OCI-LY7 (cell line): ENCODE measurements at regions of chr11 and their contacts with region 1.

Region 1: DNA sequence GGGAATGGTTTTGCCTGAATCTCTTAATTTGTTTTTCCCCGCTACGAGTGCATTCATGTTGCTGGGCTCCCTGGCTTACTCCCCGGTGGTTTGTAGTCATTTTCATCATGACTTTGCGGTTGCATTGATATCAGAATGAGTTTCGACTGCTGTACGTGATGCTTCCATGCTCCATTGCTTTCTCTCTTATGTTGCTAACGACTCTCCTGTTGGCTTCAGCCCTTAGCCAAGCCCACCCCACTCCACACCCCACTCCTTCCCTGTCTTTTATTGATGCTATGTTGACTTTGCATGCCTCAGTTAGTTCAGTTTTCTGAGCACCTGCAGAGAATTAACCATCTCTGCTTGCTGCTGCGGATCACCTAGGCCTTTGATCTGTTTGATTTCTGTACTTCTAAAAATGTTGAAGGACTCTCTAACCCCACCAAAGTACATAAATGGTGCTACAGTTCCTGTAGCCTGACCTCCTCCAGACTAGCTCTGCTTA is 65.3 kb downstream of the ARFGAP2 start:
- DNase-seq: peak; percentile 98
- H3K4me3 ChIP-seq: peak overlapping the region; percentile 62
- H3K27ac ChIP-seq: peak overlapping the region; percentile 99
- H3K4me1 ChIP-seq: peaks cover 71% of the 10 kb centered on the region
- CTCF ChIP-seq: peak; percentile 38; the same call in 1 of the 2 replicates

Region 2: DNA sequence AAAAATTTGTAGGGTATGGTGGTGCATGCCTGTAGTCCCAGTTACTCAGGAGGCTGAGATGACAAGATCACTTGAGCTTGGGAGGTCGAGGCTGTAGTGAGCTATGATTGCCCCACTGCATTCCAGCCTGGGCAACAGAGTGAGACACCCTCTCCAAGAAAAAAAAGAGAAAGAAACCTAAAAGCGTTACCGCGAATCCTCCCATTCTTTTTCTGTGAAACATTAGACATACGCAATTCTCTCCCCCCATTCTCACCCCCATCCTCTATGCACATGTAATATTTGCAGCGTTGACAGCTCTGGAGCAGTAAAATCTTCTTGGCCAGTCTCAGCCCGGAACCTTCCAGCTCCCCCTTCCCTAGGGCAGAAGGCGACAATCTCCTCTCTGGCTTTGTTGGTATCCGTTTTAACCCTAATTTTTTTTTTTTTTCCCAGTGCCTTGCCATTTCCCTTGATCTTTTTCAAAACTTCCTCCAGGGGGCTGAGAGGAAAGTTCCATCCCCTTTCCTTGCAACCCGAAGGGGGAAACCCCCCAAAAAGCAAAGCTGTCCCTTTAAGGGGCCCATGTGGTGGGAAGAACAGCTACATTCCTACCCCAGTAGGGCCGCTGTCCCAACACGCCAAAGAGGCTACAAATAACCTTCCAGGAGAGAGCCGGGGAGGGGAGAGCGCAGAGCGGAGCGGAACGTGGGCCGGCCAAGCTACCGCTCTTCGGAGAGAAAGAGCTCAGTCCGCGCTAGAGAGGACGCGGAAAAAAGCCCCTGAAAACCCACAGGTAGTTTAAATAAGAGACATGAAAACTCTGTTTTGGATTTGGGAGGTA is 194.9 kb before region 1 on chr11:
- CTCF ChIA-PET with region 1: no interaction called
- POLR2A ChIA-PET with region 1: interaction called, 4 read pairs
- intact Hi-C with region 1: loop called (anchors 1 kb)
- DNase-seq: no peak
- H3K4me3 ChIP-seq: peak overlapping the region; percentile 74
- H3K27ac ChIP-seq: no peak overlapping the region
- H3K4me1 ChIP-seq: peaks cover 66% of the 10 kb centered on the region
- CTCF ChIP-seq: peak; percentile 25; the same call in 1 of the 2 replicates

Region 3: GRCh38 chr11:47004595-47005033 is 106.7 kb before region 1 on chr11:
- CTCF ChIA-PET with region 1: interaction called, 3 read pairs
- POLR2A ChIA-PET with region 1: interaction called, 22 read pairs
- intact Hi-C with region 1: loop called (anchors 1 kb)
- DNase-seq: peak; percentile 67
- H3K4me3 ChIP-seq: peak overlapping the region; percentile 35
- H3K27ac ChIP-seq: peak overlapping the region; percentile 89
- H3K4me1 ChIP-seq: peaks cover 84% of the 10 kb centered on the region
- CTCF ChIP-seq: no peak

Region 4: GRCh38 chr11:47143322-47143721 is 32.0 kb after region 1 on chr11:
- CTCF ChIA-PET with region 1: interaction called, 3 read pairs
- POLR2A ChIA-PET with region 1: interaction called, 10 read pairs
- intact Hi-C with region 1: no loop called
- DNase-seq: no peak
- H3K4me3 ChIP-seq: no peak overlapping the region
- H3K27ac ChIP-seq: peak overlapping the region; percentile 3
- H3K4me1 ChIP-seq: peaks cover 29% of the 10 kb centered on the region
- CTCF ChIP-seq: no peak

Region 5: DNA sequence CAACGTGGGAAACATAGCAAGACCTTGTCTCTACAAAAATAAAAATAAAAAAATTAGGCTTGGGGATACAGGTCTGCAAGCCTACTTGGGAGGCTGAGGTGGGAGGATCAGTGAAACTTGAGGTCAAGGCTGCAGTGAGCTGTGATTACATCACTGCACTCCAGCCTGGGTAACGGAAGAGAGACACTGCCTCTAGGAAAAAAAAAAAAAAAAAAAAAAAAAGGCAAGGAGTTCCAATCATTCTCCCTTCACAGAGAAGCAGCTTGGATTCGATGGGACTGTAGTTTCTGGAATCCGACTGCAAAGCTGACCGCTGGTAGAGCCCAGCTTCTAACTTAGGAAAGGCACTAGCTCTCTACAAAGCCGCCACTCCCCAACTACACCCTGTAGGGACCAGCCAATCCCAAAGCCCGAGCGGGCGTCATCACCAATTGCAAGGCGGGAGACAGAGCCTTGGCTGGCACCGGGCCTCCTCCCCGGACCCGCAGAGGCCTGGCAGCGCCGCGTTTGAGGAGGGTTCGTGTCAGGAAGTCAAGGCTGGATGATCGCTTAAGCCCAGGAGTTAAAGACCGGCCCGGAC is 102.7 kb after region 1 on chr11:
- CTCF ChIA-PET with region 1: no interaction called
- POLR2A ChIA-PET with region 1: no interaction called
- intact Hi-C with region 1: loop called (anchors 5 kb)
- DNase-seq: peak; percentile 37
- H3K4me3 ChIP-seq: peak overlapping the region; percentile 69
- H3K27ac ChIP-seq: no peak overlapping the region
- H3K4me1 ChIP-seq: peaks cover 50% of the 10 kb centered on the region
- CTCF ChIP-seq: no peak